AG04449 (cell line): ENCODE measurements at regions of chr5 and their contacts with region 1.

Region 1: GRCh38 chr5:135993880-135994636 is 34.7 kb upstream of the TGFBI start:
- DNase-seq: no peak
- H3K4me3 ChIP-seq: no peak overlapping the region
- CTCF ChIP-seq: no peak

Region 2: GRCh38 chr5:135094339-135095051 is 899.6 kb before region 1 on chr5:
- CTCF ChIA-PET with region 1: no interaction called
- POLR2A ChIA-PET with region 1: no interaction called
- DNase-seq: no peak
- H3K4me3 ChIP-seq: no peak overlapping the region
- CTCF ChIP-seq: no peak

Region 3: GRCh38 chr5:136004436-136004835 is 10.4 kb after region 1 on chr5:
- CTCF ChIA-PET with region 1: interaction called, 5 read pairs
- POLR2A ChIA-PET with region 1: interaction called, 21 read pairs
- DNase-seq: no peak
- H3K4me3 ChIP-seq: no peak overlapping the region
- CTCF ChIP-seq: no peak

Region 4: GRCh38 chr5:136011414-136012001 is 17.4 kb after region 1 on chr5:
- CTCF ChIA-PET with region 1: interaction called, 9 read pairs
- POLR2A ChIA-PET with region 1: interaction called, 21 read pairs
- DNase-seq: no peak
- H3K4me3 ChIP-seq: no peak overlapping the region
- CTCF ChIP-seq: no peak

Region 5: GRCh38 chr5:136028782-136029742 is 35.0 kb after region 1 on chr5 and contains the start of gene TGFBI:
- CTCF ChIA-PET with region 1: interaction called, 3 read pairs
- POLR2A ChIA-PET with region 1: interaction called, 12 read pairs
- DNase-seq: no peak
- H3K4me3 ChIP-seq: peak within 1 kb of the TSS; percentile 82
- CTCF ChIP-seq: peak; percentile 26

Region 6: GRCh38 chr5:136374003-136374402 is 379.9 kb after region 1 on chr5:
- CTCF ChIA-PET with region 1: no interaction called
- POLR2A ChIA-PET with region 1: no interaction called
- DNase-seq: no peak
- H3K4me3 ChIP-seq: no peak overlapping the region
- CTCF ChIP-seq: peak; percentile 42